ENCODE measurements at regions of chr16 and their contacts with region 1.

Region 1: GRCh38 chr16:9365376-9365728 is 273.9 kb downstream of the HAPSTR1 start:
- DNase-seq: peak; percentile 80

Region 2: GRCh38 chr16:9447195-9447551 is 81.8 kb after region 1 on chr16:
- intact Hi-C with region 1: loop called (anchors 2 kb)
- DNase-seq: peak; percentile 81

Region 3: DNA sequence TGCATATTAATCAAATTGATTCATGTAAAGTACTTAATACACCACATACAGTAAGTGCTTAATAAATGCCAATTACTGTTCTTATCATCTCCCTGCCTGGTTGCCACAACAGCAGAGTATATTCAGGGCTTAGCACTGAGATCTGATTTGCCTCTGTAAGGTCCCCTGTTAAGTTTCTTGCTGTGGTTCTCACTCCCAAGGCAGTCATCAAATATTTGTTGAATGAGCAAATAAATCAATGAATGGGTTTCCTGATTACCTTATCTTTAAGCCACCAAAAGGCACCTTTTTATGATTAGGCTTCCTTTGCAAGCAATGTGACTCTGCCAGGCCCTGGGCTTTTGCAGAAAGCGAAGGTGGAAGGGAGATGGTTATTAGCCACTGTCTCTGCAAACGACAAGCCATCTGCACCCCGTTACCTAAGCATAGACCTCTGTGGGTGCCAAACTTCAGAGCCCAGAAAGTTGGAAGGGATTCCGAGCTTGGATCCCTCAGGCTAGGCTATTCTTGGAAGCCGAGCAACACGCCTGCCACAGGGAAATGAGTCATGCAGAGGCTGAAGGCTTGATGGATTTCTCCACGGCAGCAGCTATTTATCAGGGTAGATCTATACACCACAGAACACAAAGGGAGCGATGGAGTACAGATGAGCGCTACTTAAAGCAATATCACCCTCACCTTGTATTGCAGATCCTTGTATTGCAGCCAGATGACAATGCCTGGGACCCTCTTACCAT is 714.9 kb after region 1 on chr16:
- intact Hi-C with region 1: loop called (anchors 10 kb)
- DNase-seq: no peak